IMR-90 (cell line): ENCODE measurements at regions of chr2 and their contacts with region 1.

Region 1: GRCh38 chr2:172404824-172405223 is 22.6 kb upstream of the ITGA6 start:
- DNase-seq: peak; percentile 91
- ATAC-seq: peak; percentile 98
- H3K4me3 ChIP-seq: no peak overlapping the region
- H3K27ac ChIP-seq: no peak overlapping the region
- H3K4me1 ChIP-seq: no peaks in the 10 kb centered on the region
- H3K27me3 ChIP-seq: no peaks in the 10 kb centered on the region
- CTCF ChIP-seq: no peak
- POLR2A ChIP-seq: no peak
- RAD21 ChIP-seq: 0 out of 2 replicates have a peak, but pooled peaks have one; percentile 9

Region 2: DNA sequence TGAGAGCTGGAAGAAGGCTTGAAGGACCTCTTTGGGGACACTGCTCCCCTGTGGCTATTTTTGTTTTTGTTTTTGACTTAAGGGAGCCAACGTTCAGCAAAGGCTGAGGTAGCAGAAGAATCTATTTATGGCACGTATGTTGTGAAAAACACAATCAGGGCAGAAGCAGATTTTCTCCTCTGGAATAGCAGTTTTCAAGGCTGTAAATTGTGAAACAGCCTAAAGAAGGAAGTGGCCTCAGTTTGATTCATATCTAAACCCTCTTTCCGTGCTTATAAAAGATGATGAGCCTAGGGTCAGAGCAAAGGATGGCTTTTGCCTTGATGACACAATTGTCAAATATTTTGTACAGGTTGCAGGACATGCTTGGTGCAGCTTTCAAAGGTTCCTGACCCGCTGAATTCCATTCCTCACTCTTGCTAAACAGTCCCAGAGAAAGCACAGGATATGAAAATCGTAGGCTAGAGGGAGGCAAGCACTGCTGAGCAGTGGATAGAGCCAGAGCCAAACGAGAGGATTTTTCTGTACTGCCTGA is 196.0 kb before region 1 on chr2:
- CTCF ChIA-PET with region 1: no interaction called
- POLR2A ChIA-PET with region 1: no interaction called
- dilution Hi-C with region 1: no loop called
- in situ Hi-C with region 1: no loop called
- intact Hi-C with region 1: no loop called
- DNase-seq: peak; percentile 79
- ATAC-seq: peak; percentile 91
- H3K4me3 ChIP-seq: no peak overlapping the region
- H3K27ac ChIP-seq: no peak overlapping the region
- H3K4me1 ChIP-seq: peaks cover 22% of the 10 kb centered on the region
- H3K27me3 ChIP-seq: no peaks in the 10 kb centered on the region
- CTCF ChIP-seq: no peak
- POLR2A ChIP-seq: no peak
- RAD21 ChIP-seq: no peak; the same call in 1 of the 2 replicates

Region 3: DNA sequence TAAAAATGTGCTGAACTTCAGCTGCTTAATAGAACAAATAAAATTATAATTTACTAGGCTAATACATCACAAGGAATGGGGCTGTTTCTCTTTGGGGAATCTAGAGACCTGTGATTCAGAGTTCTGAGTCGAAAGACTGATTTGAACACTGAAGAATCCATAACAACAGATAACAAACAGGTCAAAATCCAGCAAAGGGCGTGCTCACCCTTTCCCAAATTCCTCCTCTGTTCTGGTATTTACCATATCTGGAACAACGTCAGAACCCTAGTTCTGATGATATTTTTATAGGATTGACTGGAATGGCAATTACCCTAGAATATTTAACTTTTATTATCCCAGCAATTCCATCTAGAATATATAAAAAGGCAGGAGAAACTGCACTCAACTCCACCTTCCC is 43.5 kb before region 1 on chr2:
- CTCF ChIA-PET with region 1: no interaction called
- POLR2A ChIA-PET with region 1: no interaction called
- dilution Hi-C with region 1: no loop called
- in situ Hi-C with region 1: no loop called
- intact Hi-C with region 1: loop called (anchors 5 kb)
- DNase-seq: peak; percentile 31
- ATAC-seq: no peak; the same call in 1 of the 2 replicates
- H3K4me3 ChIP-seq: no peak overlapping the region
- H3K27ac ChIP-seq: no peak overlapping the region
- H3K4me1 ChIP-seq: no peaks in the 10 kb centered on the region
- H3K27me3 ChIP-seq: no peaks in the 10 kb centered on the region; the same call in 1 of the 2 replicates
- CTCF ChIP-seq: no peak
- POLR2A ChIP-seq: no peak
- RAD21 ChIP-seq: no peak